CD8-positive, alpha-beta T cell (primary cell): ENCODE measurements at regions of chr2 and their contacts with region 1.

Region 1: GRCh38 chr2:39124000-39124745 is 3.3 kb upstream of the SOS1 start:
- DNase-seq: peak; percentile 89 to 99 (median 96)
- ATAC-seq: peak; percentile 73
- H3K4me3 ChIP-seq: peak overlapping the region; percentile 84 to 86
- H3K4me3 Mint-ChIP-seq: peak overlapping the region; percentile 91
- H3K27ac ChIP-seq: peak overlapping the region; percentile 87 to 88
- H3K27ac Mint-ChIP-seq: peak overlapping the region; percentile 96
- H3K4me1 ChIP-seq: peaks cover 41% of the 10 kb centered on the region
- H3K4me1 Mint-ChIP-seq: peaks cover 54% of the 10 kb centered on the region
- H3K27me3 ChIP-seq: no peaks in the 10 kb centered on the region
- H3K27me3 Mint-ChIP-seq: no peaks in the 10 kb centered on the region
- CTCF ChIP-seq: peak; percentile 64

Region 2: GRCh38 chr2:38602732-38603401 is 521.3 kb before region 1 on chr2 and contains the start of gene HNRNPLL:
- CTCF ChIA-PET with region 1: no interaction called
- POLR2A ChIA-PET with region 1: no interaction called
- intact Hi-C with region 1: loop called (anchors 10 kb)
- DNase-seq: peak; percentile 79 to 94 (median 91)
- ATAC-seq: peak; percentile 78
- H3K4me3 ChIP-seq: peak within 1 kb of the TSS; percentile 82 to 85
- H3K4me3 Mint-ChIP-seq: peak within 1 kb of the TSS; percentile 95
- H3K27ac ChIP-seq: peak within 1 kb of the TSS; percentile 54 to 64
- H3K27ac Mint-ChIP-seq: peak within 1 kb of the TSS; percentile 91
- H3K4me1 ChIP-seq: peaks cover 23% of the 10 kb centered on the region
- H3K4me1 Mint-ChIP-seq: peaks cover 47% of the 10 kb centered on the region
- H3K27me3 ChIP-seq: no peaks in the 10 kb centered on the region
- H3K27me3 Mint-ChIP-seq: no peaks in the 10 kb centered on the region
- CTCF ChIP-seq: no peak
- total RNA-seq, gene HNRNPLL: 35.0 to 37.6 TPM

Region 3: GRCh38 chr2:38875576-38876367 is 248.4 kb before region 1 on chr2 and contains the starts of genes DHX57 and MORN2:
- CTCF ChIA-PET with region 1: no interaction called
- POLR2A ChIA-PET with region 1: interaction called, 3 read pairs
- intact Hi-C with region 1: loop called (anchors 1 to 5 kb)
- DNase-seq: peak; percentile 61 to 86 (median 81)
- ATAC-seq: peak; percentile 91
- H3K4me3 ChIP-seq: peak within 1 kb of the TSS; percentile 77 to 97
- H3K4me3 Mint-ChIP-seq: peak within 1 kb of the TSS; percentile 92
- H3K27ac ChIP-seq: peak within 1 kb of the TSS; percentile 56 to 89
- H3K27ac Mint-ChIP-seq: peak within 1 kb of the TSS; percentile 92
- H3K4me1 ChIP-seq: peaks cover 13% of the 10 kb centered on the region
- H3K4me1 Mint-ChIP-seq: peaks cover 42% of the 10 kb centered on the region
- H3K27me3 ChIP-seq: no peaks in the 10 kb centered on the region
- H3K27me3 Mint-ChIP-seq: no peaks in the 10 kb centered on the region
- CTCF ChIP-seq: no peak
- total RNA-seq, gene DHX57: 19.7 to 20.1 TPM
- total RNA-seq, gene MORN2: 5.7 to 6.8 TPM

Region 4: DNA sequence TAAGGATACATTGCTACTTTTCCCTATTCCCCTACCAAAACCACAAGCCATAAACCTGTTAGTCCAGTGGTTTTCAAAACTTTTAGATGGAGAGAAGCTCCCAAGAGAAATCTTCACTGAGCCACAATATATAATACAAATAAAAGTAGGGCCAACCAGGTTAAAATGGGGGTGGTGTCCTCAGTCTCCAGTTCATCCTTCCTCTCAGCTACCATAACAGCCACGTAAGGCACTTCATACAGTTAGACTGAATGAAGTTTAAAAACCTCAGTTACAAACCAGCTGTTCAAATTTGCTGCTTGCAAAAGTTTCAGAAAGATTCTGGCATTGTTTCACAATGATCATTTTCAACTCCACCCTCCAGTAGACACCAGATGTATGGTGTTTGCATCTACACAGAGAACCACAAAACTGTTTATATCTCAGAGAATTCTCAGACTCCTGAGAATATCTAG is 29.3 kb before region 1 on chr2:
- CTCF ChIA-PET with region 1: interaction called, 4 read pairs
- POLR2A ChIA-PET with region 1: interaction called, 16 read pairs
- intact Hi-C with region 1: no loop called
- DNase-seq: no peak
- ATAC-seq: no peak
- H3K4me3 ChIP-seq: no peak overlapping the region
- H3K4me3 Mint-ChIP-seq: no peak overlapping the region
- H3K27ac ChIP-seq: no peak overlapping the region
- H3K27ac Mint-ChIP-seq: peak overlapping the region; percentile 23
- H3K4me1 ChIP-seq: peaks cover 12% of the 10 kb centered on the region
- H3K4me1 Mint-ChIP-seq: peaks cover 66% of the 10 kb centered on the region
- H3K27me3 ChIP-seq: no peaks in the 10 kb centered on the region
- H3K27me3 Mint-ChIP-seq: no peaks in the 10 kb centered on the region
- CTCF ChIP-seq: no peak

Region 5: DNA sequence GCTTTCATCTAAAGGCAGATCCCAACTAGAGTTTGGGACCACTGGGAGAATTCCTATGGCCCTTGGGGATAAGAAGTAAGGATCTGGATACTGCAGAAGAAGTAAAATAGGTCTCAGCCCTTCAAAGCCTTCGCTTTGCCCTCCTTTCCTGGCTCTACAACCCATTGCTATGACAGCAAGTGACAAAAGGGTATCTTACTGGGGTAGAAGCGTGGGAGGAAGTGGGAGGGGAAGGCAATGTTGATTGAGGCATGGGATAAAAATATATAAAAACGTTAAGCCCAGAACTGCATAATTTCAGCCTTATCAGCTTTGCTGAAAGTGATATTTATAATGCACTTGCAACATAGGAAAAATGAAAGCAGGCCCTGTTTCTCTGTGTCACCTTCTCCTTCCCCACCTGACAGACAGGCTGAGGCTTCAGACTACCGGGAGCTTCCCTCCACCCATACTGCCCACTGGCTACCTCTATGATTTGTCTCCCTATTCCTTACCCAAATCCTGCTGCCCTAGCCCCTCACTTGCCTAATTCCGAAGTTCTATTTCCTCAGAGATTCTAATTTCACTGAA is 11.6 kb after region 1 on chr2:
- CTCF ChIA-PET with region 1: interaction called, 9 read pairs
- POLR2A ChIA-PET with region 1: interaction called, 17 read pairs
- intact Hi-C with region 1: no loop called
- DNase-seq: peak in 1 of 9 experiments; percentile 29
- ATAC-seq: peak; percentile 56
- H3K4me3 ChIP-seq: no peak overlapping the region
- H3K4me3 Mint-ChIP-seq: peak overlapping the region; percentile 63
- H3K27ac ChIP-seq: no peak overlapping the region
- H3K27ac Mint-ChIP-seq: peak overlapping the region; percentile 78
- H3K4me1 ChIP-seq: peaks cover 16% of the 10 kb centered on the region
- H3K4me1 Mint-ChIP-seq: peaks cover 33% of the 10 kb centered on the region
- H3K27me3 ChIP-seq: no peaks in the 10 kb centered on the region
- H3K27me3 Mint-ChIP-seq: no peaks in the 10 kb centered on the region
- CTCF ChIP-seq: no peak

Region 6: DNA sequence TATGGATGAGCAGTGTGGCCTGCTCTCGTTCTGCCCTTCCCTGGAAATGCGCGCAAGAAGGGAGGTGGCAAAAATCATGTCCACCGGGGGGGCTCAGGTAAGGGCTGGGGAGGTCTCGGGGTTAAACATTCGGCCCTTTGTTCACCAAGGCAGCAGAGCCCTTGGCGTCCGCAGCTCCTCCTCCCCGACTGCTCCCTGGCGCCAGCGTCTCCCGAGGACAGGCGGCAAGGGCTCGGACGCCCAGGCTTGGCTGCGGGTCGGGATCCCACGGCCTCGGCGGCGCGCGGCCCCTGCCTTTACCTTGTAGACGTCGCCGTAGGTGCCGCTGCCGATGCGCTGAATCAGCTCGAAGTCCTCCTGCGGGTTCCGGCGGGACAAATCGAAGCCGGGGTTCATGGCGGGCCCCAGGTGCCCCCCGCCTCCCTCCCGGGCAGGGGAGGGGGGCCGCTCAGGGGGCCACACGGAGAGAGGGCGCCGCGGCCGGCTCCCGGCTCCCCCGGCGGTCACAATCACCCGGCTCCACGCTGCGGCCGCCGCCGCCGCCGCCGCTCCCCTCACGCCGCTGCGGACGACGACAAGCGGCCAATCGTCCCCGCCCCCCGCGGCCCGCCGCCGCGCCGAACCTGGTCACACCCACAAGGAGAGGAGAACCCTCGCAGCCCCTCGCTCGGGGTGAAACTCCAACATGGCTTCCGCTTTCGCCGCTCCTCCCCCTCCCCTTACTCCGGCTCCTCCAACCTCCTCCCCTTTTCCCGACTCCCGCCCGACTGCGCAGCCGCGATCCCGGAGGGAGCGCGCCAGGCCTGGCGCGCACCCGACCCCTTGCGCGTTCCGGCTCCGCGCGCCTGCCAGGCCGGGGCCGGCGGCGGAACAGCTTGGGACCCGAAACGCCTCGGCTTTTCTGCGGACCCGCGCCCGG is 312.7 kb after region 1 on chr2 and contains the start of gene MAP4K3:
- CTCF ChIA-PET with region 1: no interaction called
- POLR2A ChIA-PET with region 1: no interaction called
- intact Hi-C with region 1: loop called in 1 of 2 experiments (anchors 5 kb)
- DNase-seq: peak; percentile 30 to 85 (median 68)
- ATAC-seq: peak; percentile 61
- H3K4me3 ChIP-seq: peak within 1 kb of the TSS; percentile 74 to 82
- H3K4me3 Mint-ChIP-seq: peak within 1 kb of the TSS; percentile 90
- H3K27ac ChIP-seq: peak within 1 kb of the TSS; percentile 32 to 52
- H3K27ac Mint-ChIP-seq: peak within 1 kb of the TSS; percentile 84
- H3K4me1 ChIP-seq: peaks cover 22% of the 10 kb centered on the region
- H3K4me1 Mint-ChIP-seq: peaks cover 49% of the 10 kb centered on the region
- H3K27me3 ChIP-seq: no peaks in the 10 kb centered on the region
- H3K27me3 Mint-ChIP-seq: no peaks in the 10 kb centered on the region
- CTCF ChIP-seq: no peak
- total RNA-seq, gene MAP4K3: 15.0 to 19.8 TPM